ENCODE measurements at regions of chr18 and their contacts with region 1.

Region 1: GRCh38 chr18:35756506-35757117 is 175.1 kb downstream of the GALNT1 start:
- DNase-seq: peak; percentile 51
- ATAC-seq: peak; percentile 73
- H3K4me3 ChIP-seq: no peak overlapping the region
- H3K27ac ChIP-seq: no peak overlapping the region
- H3K4me1 ChIP-seq: no peaks in the 10 kb centered on the region
- H3K27me3 ChIP-seq: no peaks in the 10 kb centered on the region
- CTCF ChIP-seq: peak; percentile 66

Region 2: GRCh38 chr18:35949903-35950627 is 193.5 kb after region 1 on chr18:
- CTCF ChIA-PET with region 1: interaction called, 3 read pairs
- POLR2A ChIA-PET with region 1: no interaction called
- intact Hi-C with region 1: loop called (anchors 1 kb)
- DNase-seq: peak; percentile 41
- ATAC-seq: peak; percentile 37; the same call in 1 of the 2 replicates
- H3K4me3 ChIP-seq: peak overlapping the region; percentile 48; the same call in 1 of the 2 replicates
- H3K27ac ChIP-seq: no peak overlapping the region
- H3K4me1 ChIP-seq: no peaks in the 10 kb centered on the region
- H3K27me3 ChIP-seq: no peaks in the 10 kb centered on the region
- CTCF ChIP-seq: peak; percentile 63

Region 3: GRCh38 chr18:35972197-35973052 is 215.8 kb after region 1 on chr18 and contains the start of gene RMP24:
- CTCF ChIA-PET with region 1: no interaction called
- POLR2A ChIA-PET with region 1: no interaction called
- intact Hi-C with region 1: loop called (anchors 1 kb)
- DNase-seq: peak; percentile 79
- ATAC-seq: peak; percentile 94
- H3K4me3 ChIP-seq: peak within 1 kb of the TSS; percentile 84
- H3K27ac ChIP-seq: peak within 1 kb of the TSS; percentile 51; the same call in 1 of the 2 replicates
- H3K4me1 ChIP-seq: no peaks in the 10 kb centered on the region
- H3K27me3 ChIP-seq: no peaks in the 10 kb centered on the region
- CTCF ChIP-seq: no peak

Region 4: GRCh38 chr18:36284671-36285295 is 528.2 kb after region 1 on chr18:
- CTCF ChIA-PET with region 1: no interaction called
- POLR2A ChIA-PET with region 1: no interaction called
- intact Hi-C with region 1: loop called (anchors 5 kb)
- DNase-seq: peak; percentile 55
- ATAC-seq: peak; percentile 27; the same call in 1 of the 2 replicates
- H3K4me3 ChIP-seq: no peak overlapping the region
- H3K27ac ChIP-seq: no peak overlapping the region
- H3K4me1 ChIP-seq: no peaks in the 10 kb centered on the region
- H3K27me3 ChIP-seq: no peaks in the 10 kb centered on the region
- CTCF ChIP-seq: peak; percentile 74